MCF 10A (cell line): ENCODE measurements at regions of chr20 and their contacts with region 1.

Region 1: GRCh38 chr20:18276821-18277220 is 11.5 kb upstream of the ZNF133 start:
- DNase-seq: peak; percentile 85
- H3K4me3 Mint-ChIP-seq: no peak overlapping the region
- H3K27ac Mint-ChIP-seq: no peak overlapping the region
- H3K4me1 Mint-ChIP-seq: peaks cover 19% of the 10 kb centered on the region
- H3K27me3 Mint-ChIP-seq: peaks cover 12% of the 10 kb centered on the region
- CTCF ChIP-seq: peak; percentile 77

Region 2: DNA sequence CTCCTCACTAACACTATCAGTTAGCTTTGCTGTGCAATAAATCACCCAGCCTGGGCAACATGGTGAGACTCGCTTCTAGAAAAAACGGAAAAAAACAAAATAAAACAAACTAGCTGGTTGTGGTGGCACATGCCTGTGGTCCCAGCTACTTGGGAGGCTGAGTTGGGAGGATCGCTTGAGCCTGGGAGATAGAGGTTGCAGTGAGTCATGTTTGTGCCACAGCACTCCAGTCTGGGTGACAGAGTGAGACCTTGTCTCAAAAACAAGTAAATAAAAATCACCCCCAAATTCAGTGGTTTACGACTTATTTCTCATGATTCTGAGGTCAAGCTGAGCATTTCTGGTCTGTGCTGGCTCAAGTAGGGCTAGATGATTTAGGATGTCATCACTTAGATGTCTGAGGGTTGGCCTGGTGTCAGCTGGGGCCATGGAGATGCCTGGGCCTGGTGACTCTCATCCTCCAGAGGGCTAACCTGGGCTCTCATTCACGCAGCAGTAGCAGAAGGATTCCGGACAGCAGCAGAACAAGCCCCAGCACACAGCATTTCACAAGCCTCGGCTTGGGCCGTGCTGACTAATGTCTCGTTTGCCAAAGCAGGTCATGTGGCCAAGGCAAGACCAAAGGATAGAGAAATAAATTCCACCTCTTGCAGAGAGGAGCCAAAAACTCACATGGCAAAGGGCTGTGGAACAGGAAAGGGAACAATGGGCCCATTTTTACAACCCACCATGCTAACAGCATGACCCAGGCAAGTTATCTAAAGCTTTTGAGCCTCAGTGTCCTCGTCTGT is 275.5 kb before region 1 on chr20:
- CTCF ChIA-PET with region 1: interaction called, 13 read pairs
- POLR2A ChIA-PET with region 1: interaction called, 7 read pairs
- intact Hi-C with region 1: loop called (anchors 1 kb)
- DNase-seq: peak; percentile 94
- H3K4me3 Mint-ChIP-seq: peak overlapping the region; percentile 10
- H3K27ac Mint-ChIP-seq: peak overlapping the region; percentile 33
- H3K4me1 Mint-ChIP-seq: peaks cover 13% of the 10 kb centered on the region
- H3K27me3 Mint-ChIP-seq: no peaks in the 10 kb centered on the region
- CTCF ChIP-seq: no peak

Region 3: GRCh38 chr20:18090044-18090443 is 186.8 kb before region 1 on chr20:
- CTCF ChIA-PET with region 1: interaction called, 10 read pairs
- POLR2A ChIA-PET with region 1: no interaction called
- intact Hi-C with region 1: loop called (anchors 1 kb)
- DNase-seq: peak; percentile 5
- H3K4me3 Mint-ChIP-seq: no peak overlapping the region
- H3K27ac Mint-ChIP-seq: no peak overlapping the region
- H3K4me1 Mint-ChIP-seq: peaks cover 5% of the 10 kb centered on the region
- H3K27me3 Mint-ChIP-seq: no peaks in the 10 kb centered on the region
- CTCF ChIP-seq: no peak

Region 4: GRCh38 chr20:18188434-18188833 is 88.4 kb before region 1 on chr20:
- CTCF ChIA-PET with region 1: interaction called, 17 read pairs
- POLR2A ChIA-PET with region 1: interaction called, 3 read pairs
- intact Hi-C with region 1: no loop called
- DNase-seq: no peak
- H3K4me3 Mint-ChIP-seq: no peak overlapping the region
- H3K27ac Mint-ChIP-seq: no peak overlapping the region
- H3K4me1 Mint-ChIP-seq: no peaks in the 10 kb centered on the region
- H3K27me3 Mint-ChIP-seq: no peaks in the 10 kb centered on the region
- CTCF ChIP-seq: no peak

Region 5: DNA sequence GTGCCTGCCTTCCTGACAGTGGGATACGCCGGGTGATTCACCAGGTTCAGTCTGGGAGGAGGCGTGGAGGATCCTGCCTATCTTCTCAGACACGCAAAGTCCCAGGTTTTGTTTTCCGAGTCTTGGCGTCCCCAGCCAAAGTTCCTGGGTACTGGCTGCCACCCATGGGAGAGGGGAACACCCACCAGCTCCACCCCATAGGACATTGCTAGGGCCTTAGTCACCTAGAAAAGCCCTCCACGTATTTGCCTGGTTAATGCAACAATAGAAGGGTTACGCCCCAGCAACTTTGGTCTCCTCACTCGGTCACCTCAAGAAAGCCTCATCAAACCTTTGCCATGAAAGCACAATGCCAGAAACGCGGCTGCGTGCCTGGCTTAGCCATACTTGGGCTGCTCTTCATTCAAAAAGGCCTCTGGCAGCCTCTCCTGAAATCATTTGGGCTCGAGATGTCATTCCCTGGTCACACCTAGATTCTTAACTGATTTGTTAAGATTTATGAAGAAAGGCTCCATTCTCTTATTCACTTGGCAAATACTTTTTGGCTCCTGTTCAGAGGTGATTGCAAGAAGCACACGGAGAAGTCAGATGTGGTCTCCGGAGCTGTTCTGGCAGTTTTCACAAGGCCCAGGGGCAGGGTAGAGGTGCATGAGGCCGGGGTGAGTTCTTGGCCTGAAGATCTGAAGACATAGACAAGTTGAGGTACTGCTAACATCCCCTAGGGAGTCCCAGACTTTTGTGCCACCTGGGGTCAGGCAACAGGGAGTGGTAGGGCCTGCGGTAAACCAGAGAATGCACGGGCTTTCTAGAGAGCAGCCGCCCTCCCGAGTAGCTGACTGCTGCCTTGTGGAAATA is 24.0 kb before region 1 on chr20:
- CTCF ChIA-PET with region 1: interaction called, 12 read pairs
- POLR2A ChIA-PET with region 1: interaction called, 16 read pairs
- intact Hi-C with region 1: loop called (anchors 1 kb)
- DNase-seq: peak; percentile 91
- H3K4me3 Mint-ChIP-seq: peak overlapping the region; percentile 52
- H3K27ac Mint-ChIP-seq: peak overlapping the region; percentile 100
- H3K4me1 Mint-ChIP-seq: peaks cover 30% of the 10 kb centered on the region
- H3K27me3 Mint-ChIP-seq: no peaks in the 10 kb centered on the region
- CTCF ChIP-seq: no peak